ENCODE measurements at regions of chr18 and their contacts with region 1.

Region 1: GRCh38 chr18:62714671-62715435 is 488 bp upstream of the PHLPP1 start:
- DNase-seq: peak; percentile 100
- H3K4me3 ChIP-seq: peak overlapping the region; percentile 52
- H3K27ac ChIP-seq: peak overlapping the region; percentile 88
- H3K4me1 ChIP-seq: no peaks in the 10 kb centered on the region
- H3K27me3 ChIP-seq: no peaks in the 10 kb centered on the region
- CTCF ChIP-seq: peak; percentile 61

Region 2: GRCh38 chr18:62957885-62958472 is 243.1 kb after region 1 on chr18:
- intact Hi-C with region 1: loop called (anchors 5 kb)
- DNase-seq: peak; percentile 67
- H3K4me3 ChIP-seq: no peak overlapping the region
- H3K27ac ChIP-seq: no peak overlapping the region
- H3K4me1 ChIP-seq: no peaks in the 10 kb centered on the region
- H3K27me3 ChIP-seq: no peaks in the 10 kb centered on the region
- CTCF ChIP-seq: peak; percentile 43